Naive thymus-derived CD8-positive, alpha-beta T cell (primary cell): ENCODE measurements at regions of chr20 and their contacts with region 1.

Region 1: DNA sequence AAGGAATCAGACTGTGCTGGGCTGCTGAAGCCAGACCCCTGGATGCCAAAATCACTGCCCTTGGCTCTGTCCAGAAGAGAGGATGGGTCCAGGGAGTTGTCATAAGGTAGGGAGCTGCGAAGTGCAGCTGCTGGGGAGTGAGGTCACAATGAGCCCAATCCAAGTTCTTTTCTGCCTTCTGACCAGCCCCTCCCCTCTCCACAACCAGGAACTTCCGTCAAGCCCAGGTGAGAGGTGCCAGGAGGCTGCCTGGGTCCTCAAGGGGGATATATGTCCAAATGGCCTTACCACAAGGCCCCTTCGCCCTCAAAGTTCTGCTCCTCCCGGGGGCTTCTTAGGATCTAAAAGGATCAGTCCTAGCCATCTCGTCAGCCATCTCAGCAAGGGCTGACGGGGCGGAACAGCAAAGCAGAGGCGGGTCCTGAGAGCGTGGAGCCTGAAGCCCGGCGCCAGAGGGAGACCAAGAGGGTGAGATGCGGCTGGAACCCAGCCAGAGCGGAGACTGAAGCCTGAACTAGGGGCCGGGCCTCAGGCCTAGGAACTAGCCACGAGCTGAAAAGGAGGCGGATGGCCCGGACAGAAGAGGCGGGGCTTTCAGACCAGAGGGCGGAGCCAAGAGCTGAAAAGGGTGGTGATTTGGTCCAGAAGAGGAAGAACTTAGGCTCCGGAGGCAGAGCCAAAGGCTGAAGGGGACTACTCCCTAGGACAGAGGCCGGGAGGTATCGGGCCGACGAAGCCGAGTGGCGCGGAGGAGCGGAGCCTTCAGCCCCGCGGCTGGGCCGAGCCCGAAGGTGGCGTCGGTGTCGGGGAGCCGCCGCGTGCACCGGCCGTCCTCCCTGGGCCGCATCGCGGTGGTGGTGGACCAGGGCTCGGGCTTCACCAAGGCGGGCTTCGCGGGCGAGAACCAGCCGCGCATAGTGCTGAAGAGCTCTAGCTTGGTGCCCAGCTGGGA is at the start of gene ACTL10:
- DNase-seq: peak; percentile 47 to 84 (median 60)
- ATAC-seq: peak; percentile 39 to 51
- H3K4me3 Mint-ChIP-seq: peak within 1 kb of the TSS; percentile 90 to 99 (median 96)
- H3K27ac Mint-ChIP-seq: peak within 1 kb of the TSS; percentile 86 to 97 (median 94)
- H3K4me1 Mint-ChIP-seq: peaks cover 17 to 44% (median 32%) of the 10 kb centered on the region in 4 donors
- H3K27me3 Mint-ChIP-seq: no peaks in the 10 kb centered on the region
- polyA plus RNA-seq, gene ACTL10: 1.8 to 3.2 (median 1.9) TPM

Region 2: DNA sequence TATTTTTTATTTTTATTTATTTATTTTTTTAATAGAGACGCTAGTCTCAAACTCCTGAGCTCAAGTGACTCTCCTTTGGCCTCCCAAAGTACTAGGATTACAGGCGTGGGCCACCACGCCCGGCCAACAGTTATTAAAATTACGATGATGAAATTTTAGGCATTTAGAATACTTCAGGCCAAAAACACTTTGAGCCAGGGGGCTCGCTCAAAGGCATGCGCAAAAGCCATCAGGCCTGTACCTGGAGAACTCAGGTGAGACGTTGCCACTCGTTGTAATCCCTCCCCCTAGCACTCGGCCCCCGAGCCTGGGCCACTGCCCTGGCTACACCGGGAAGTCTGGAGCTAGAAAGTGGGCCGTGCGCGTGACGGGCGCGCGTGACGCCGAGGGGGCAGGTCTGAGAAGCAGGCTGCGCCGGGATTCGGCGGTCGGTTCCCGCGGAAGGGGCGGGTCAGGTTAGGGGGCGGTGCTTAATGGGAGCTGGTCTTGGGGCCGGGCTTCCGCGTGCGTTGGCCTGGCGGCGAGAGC is 177.0 kb before region 1 on chr20:
- POLR2A ChIA-PET with region 1: interaction called, 13 read pairs
- DNase-seq: peak; percentile 97 to 99 (median 99)
- ATAC-seq: peak; percentile 92 to 94
- H3K4me3 Mint-ChIP-seq: peak overlapping the region; percentile 81 to 93 (median 86)
- H3K27ac Mint-ChIP-seq: peak overlapping the region; percentile 82 to 98 (median 94)
- H3K4me1 Mint-ChIP-seq: peaks cover 6 to 30% (median 15%) of the 10 kb centered on the region in 4 donors
- H3K27me3 Mint-ChIP-seq: no peaks in the 10 kb centered on the region

Region 3: GRCh38 chr20:33647603-33648395 is 18.8 kb before region 1 on chr20:
- POLR2A ChIA-PET with region 1: no interaction called
- DNase-seq: no peak
- ATAC-seq: no peak
- H3K4me3 Mint-ChIP-seq: peak overlapping the region in 1 of 10 donors; percentile 24
- H3K27ac Mint-ChIP-seq: peak overlapping the region in 5 of 10 donors; percentile 29 to 85 (median 52)
- H3K4me1 Mint-ChIP-seq: peaks cover 0 to 20% (median 7%) of the 10 kb centered on the region in 4 donors
- H3K27me3 Mint-ChIP-seq: no peaks in the 10 kb centered on the region

Region 4: GRCh38 chr20:33679758-33680485 is 13.4 kb after region 1 on chr20:
- POLR2A ChIA-PET with region 1: interaction called, 21 read pairs
- DNase-seq: no peak
- ATAC-seq: peak; percentile 53 to 62
- H3K4me3 Mint-ChIP-seq: peak overlapping the region in 6 of 10 donors; percentile 23 to 77 (median 62)
- H3K27ac Mint-ChIP-seq: peak overlapping the region in 7 of 10 donors; percentile 4 to 93 (median 62)
- H3K4me1 Mint-ChIP-seq: peaks cover 9 to 43% (median 29%) of the 10 kb centered on the region in 4 donors
- H3K27me3 Mint-ChIP-seq: no peaks in the 10 kb centered on the region

Region 5: GRCh38 chr20:33719989-33720709 is 53.6 kb after region 1 on chr20 and contains the start of gene PXMP4:
- POLR2A ChIA-PET with region 1: interaction called, 13 read pairs
- DNase-seq: peak; percentile 72 to 95 (median 90)
- ATAC-seq: peak; percentile 96 to 97
- H3K4me3 Mint-ChIP-seq: peak within 1 kb of the TSS; percentile 70 to 97 (median 88)
- H3K27ac Mint-ChIP-seq: peak within 1 kb of the TSS; percentile 76 to 98 (median 93)
- H3K4me1 Mint-ChIP-seq: peaks cover 16 to 40% (median 28%) of the 10 kb centered on the region in 4 donors
- H3K27me3 Mint-ChIP-seq: no peaks in the 10 kb centered on the region
- polyA plus RNA-seq, gene PXMP4: 8.9 to 16.1 (median 16.0) TPM